IMR-90 (cell line): ENCODE measurements at regions of chr2 and their contacts with region 1.

Region 1: GRCh38 chr2:190511104-190511503 is 23.4 kb downstream of the NEMP2 start:
- DNase-seq: peak; percentile 57
- ATAC-seq: peak; percentile 68
- H3K4me3 ChIP-seq: no peak overlapping the region
- H3K27ac ChIP-seq: no peak overlapping the region
- H3K4me1 ChIP-seq: no peaks in the 10 kb centered on the region
- H3K27me3 ChIP-seq: no peaks in the 10 kb centered on the region
- CTCF ChIP-seq: peak; percentile 73
- POLR2A ChIP-seq: no peak
- RAD21 ChIP-seq: peak; percentile 84

Region 2: DNA sequence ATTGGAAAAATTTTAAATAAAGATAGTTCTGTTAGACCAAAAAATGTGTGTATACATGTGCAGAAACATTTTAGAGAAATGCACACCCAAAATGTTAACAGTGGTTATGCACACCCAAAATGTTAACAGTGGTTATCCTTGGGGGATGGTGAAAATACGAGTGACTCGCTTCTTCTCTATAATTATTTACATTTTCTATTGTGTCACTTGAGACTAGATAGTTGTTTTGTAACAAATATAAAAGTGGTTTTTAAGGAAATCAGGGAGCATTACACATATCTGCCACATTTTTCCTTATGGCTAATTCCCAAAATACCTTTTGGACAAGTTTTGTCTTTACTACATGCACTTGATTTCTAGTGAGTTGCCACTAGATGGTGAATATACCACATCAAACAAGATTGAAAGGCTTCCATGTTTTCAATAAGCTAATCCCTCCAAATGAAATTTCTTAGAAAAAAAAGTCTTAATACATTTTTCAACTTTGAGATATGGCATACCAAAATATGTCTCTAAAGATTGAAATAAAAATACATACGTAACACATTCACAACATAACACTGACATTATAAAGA is 182.4 kb before region 1 on chr2:
- CTCF ChIA-PET with region 1: no interaction called
- POLR2A ChIA-PET with region 1: no interaction called
- dilution Hi-C with region 1: no loop called
- in situ Hi-C with region 1: no loop called
- intact Hi-C with region 1: loop called (anchors 1 kb)
- DNase-seq: peak; percentile 33
- ATAC-seq: peak; percentile 44
- H3K4me3 ChIP-seq: no peak overlapping the region
- H3K27ac ChIP-seq: no peak overlapping the region
- H3K4me1 ChIP-seq: no peaks in the 10 kb centered on the region
- H3K27me3 ChIP-seq: no peaks in the 10 kb centered on the region
- CTCF ChIP-seq: peak; percentile 36
- POLR2A ChIP-seq: no peak
- RAD21 ChIP-seq: peak; percentile 22; the same call in 1 of the 2 replicates

Region 3: DNA sequence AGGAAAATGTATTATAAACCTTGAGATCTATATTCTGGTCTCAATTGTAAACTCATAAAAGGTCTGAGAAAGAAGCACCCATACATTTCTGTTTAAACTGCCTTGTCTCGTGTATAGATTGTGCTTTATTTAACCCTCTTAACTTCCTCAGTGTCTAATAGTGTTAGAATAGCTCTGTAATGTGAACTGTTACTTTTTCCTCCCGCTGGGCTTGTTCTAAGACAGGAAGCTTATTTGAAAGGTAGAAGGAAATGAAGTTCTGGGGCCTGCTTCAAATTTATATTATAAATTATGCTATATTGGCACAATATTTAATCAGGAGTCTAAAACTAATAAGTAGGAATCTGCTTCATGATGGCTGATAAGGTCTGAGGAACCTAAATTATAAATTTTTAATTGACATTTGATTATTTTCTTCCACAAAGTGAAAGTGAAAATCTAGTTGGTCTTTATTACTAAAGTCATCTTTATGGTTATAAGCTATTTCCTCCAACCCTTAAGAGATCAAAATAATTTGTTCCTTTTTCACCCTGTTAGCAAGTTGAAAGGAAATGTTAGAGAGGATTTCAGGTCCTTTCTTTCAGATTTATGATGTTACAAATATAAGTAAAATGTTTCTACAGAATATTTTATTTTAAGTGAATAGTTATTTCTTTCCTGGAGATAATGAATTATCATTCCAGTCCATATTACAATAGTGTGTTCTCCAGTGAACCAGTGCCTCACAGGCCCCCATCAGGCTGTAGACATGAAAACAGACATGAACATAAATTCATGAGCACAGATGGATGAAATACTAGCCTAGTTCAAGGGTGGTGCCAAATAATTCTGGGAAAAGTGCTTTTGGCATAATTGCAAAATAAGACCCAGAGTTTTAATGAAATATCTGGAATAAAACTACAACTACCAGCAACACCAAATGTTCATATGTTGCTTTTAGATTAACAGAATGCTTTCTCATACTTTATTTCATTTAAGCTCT is 95.0 kb before region 1 on chr2:
- CTCF ChIA-PET with region 1: no interaction called
- POLR2A ChIA-PET with region 1: no interaction called
- dilution Hi-C with region 1: no loop called
- in situ Hi-C with region 1: loop called (anchors 10 kb)
- intact Hi-C with region 1: no loop called
- DNase-seq: no peak
- ATAC-seq: no peak
- H3K4me3 ChIP-seq: no peak overlapping the region
- H3K27ac ChIP-seq: no peak overlapping the region
- H3K4me1 ChIP-seq: peaks cover 2% of the 10 kb centered on the region; the same call in 1 of the 2 replicates
- H3K27me3 ChIP-seq: no peaks in the 10 kb centered on the region
- CTCF ChIP-seq: no peak
- POLR2A ChIP-seq: no peak
- RAD21 ChIP-seq: no peak

Region 4: GRCh38 chr2:190599073-190599472 is 88.0 kb after region 1 on chr2:
- CTCF ChIA-PET with region 1: no interaction called
- POLR2A ChIA-PET with region 1: no interaction called
- dilution Hi-C with region 1: no loop called
- in situ Hi-C with region 1: no loop called
- intact Hi-C with region 1: no loop called
- DNase-seq: no peak
- ATAC-seq: no peak
- H3K4me3 ChIP-seq: no peak overlapping the region
- H3K27ac ChIP-seq: no peak overlapping the region
- H3K4me1 ChIP-seq: no peaks in the 10 kb centered on the region
- H3K27me3 ChIP-seq: no peaks in the 10 kb centered on the region
- CTCF ChIP-seq: no peak
- POLR2A ChIP-seq: no peak
- RAD21 ChIP-seq: no peak

Region 5: DNA sequence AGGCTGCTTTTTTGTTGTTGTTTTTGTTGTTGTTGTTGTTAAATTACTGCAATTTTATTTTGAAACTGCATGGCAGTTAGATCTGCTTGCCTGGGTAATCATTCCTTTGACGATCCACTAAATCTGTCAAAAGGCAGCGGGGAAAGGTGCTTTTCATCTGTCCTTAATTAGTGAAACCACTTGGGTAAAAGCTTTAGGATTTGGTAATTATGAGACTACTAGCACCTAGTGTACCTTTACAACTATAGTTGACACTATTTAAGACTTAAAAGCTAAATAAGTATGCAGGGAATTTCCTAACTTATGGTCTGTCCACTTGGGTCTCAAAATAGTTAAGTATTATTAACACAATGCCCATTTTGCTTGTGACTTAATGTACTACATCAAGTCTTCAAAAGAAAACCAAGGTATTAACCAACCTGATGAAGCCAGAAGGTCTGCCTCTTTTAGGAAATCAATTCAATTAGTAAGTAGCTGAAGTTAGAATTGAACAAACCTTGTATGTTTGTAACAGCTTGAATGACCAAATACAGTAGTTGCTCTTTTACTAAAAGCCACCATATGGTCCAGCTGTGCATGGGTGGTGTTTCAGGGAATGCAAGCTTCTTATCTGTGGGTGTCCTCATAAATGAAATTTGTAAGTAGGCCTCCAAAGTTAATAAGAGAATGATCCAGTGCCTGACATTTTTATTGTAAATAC is 182.6 kb after region 1 on chr2:
- CTCF ChIA-PET with region 1: interaction called, 10 read pairs
- POLR2A ChIA-PET with region 1: no interaction called
- dilution Hi-C with region 1: no loop called
- in situ Hi-C with region 1: no loop called
- intact Hi-C with region 1: no loop called
- DNase-seq: no peak
- ATAC-seq: no peak
- H3K4me3 ChIP-seq: no peak overlapping the region
- H3K27ac ChIP-seq: no peak overlapping the region
- H3K4me1 ChIP-seq: no peaks in the 10 kb centered on the region; the same call in 1 of the 2 replicates
- H3K27me3 ChIP-seq: no peaks in the 10 kb centered on the region
- CTCF ChIP-seq: no peak
- POLR2A ChIP-seq: no peak
- RAD21 ChIP-seq: no peak